Head of caudate nucleus (tissue), 42 donors: ENCODE measurements at regions of chr12 and their contacts with region 1.

Region 1: DNA sequence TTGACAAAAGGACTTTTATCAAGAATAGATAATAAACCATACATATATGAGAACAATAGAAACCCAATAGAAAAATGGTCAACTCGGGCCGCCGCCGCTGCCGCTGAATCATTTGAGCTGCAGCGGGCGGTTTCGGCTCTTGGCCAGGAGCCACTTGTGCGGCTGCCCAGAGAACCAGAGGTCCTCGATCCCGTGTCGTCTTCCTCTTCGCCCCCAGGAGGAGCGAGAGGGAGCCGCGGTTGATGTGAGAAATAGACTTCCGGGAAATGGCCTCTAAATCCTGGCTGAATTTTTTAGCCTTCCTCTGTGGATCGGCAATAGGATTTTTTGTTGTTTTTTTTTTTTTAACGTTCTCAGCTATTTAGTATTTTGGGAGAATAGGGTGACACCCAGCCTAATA is 44.8 kb downstream of the CPSF6 start:
- DNase-seq: peak; percentile 42 to 88 (median 69)

Region 2: DNA sequence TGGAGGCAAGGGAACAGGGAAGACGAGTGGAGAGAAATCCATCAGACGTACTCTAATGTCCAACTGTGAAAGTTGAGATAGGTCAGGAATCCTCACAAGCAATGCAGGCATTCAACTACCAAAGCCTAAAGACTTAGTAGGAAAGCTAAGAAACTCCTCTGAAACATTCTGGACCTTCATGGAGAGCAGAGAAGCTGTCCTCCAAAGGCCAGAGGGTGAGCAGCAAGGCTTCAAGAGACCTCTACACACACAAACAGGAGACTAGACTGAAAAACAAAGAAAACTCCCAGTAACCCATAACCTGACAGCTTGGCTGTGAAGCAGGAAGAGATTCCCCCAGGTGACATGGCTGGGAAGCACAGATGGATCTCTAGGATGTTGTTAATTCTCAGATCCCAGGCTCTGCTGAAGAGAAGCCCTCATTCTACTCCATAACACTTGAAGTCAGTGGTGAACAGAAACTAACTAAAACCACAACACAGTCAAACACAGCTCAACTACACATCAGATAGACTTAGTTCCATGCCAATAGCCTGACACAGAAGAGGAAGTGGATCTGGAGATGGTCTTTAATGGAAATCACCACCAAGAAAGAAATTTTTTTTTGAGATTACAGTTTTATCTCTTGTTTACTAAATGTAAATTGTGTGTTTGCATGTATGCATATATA is 40.8 kb after region 1 on chr12:
- intact Hi-C with region 1: no loop called
- DNase-seq: no peak

Region 3: GRCh38 chr12:69359531-69360347 is 75.6 kb after region 1 on chr12 and contains the start of gene YEATS4:
- intact Hi-C with region 1: loop called (anchors 10 kb)
- DNase-seq: peak; percentile 62 to 92 (median 85)